Panc1 (cell line): ENCODE measurements at regions of chr10 and their contacts with region 1.

Region 1: DNA sequence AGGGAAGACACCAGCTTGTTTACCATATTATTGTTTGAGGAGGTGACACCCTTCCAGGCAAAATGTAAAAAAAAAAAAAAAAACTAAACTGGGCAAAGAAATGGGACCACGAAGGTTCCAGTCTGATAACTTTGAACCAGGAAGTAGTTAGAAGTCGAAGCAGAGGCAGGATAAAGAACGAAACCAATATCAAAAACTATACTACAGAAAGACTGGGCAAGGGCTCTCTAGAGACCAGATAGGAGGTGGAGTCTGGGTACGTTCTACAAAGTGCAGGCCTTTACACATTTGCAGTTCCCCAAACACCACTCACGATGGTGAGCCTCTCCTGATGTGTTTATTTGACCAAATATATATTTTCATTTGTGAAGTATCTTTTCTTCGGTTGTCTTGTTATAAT is 125.7 kb upstream of the CDK1 start:
- DNase-seq: no peak
- ATAC-seq: no peak
- H3K4me3 ChIP-seq: no peak overlapping the region
- H3K27ac ChIP-seq: no peak overlapping the region
- H3K4me1 ChIP-seq: no peaks in the 10 kb centered on the region
- H3K27me3 ChIP-seq: no peaks in the 10 kb centered on the region
- CTCF ChIP-seq: no peak

Region 2: GRCh38 chr10:60473563-60473962 is 179.1 kb before region 1 on chr10:
- CTCF ChIA-PET with region 1: interaction called, 5 read pairs
- POLR2A ChIA-PET with region 1: interaction called, 10 read pairs
- in situ Hi-C with region 1: no loop called
- intact Hi-C with region 1: no loop called
- DNase-seq: peak; percentile 87
- ATAC-seq: peak; percentile 99
- H3K4me3 ChIP-seq: no peak overlapping the region
- H3K27ac ChIP-seq: peak overlapping the region; percentile 62; the same call in 1 of the 2 replicates
- H3K4me1 ChIP-seq: peaks cover 7% of the 10 kb centered on the region
- H3K27me3 ChIP-seq: no peaks in the 10 kb centered on the region
- CTCF ChIP-seq: no peak

Region 3: DNA sequence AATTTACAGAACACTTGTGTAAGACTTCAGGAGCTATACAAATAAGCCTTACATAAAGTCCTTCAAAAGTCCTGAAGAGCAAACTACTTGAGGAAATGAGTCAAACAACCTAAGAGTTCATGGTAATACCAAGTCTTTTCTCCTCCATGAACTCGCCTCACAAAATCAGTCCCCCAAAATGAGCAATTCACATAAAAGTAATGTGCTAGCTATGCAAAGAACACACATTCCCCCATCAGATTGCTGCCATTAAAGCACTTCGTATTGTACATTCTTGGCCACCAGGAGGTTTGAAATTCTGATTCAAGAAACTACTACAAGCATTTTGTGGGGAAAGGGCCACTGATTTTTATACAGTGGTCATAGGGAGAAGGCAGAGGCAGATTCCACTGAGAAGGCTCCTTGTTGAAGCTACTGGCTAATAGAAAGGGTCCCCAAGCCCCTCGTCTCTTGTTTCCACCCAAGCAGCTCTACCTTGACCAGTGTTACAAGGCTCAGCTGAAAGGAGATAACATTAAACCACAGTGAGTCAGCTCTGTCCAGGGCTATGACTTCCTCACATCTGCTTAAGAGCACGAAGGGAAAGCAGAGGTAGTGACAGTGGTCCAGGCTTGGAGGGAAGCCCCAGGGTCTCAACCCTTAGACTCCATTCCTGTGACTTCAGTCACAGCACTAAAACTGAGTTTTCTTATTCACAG is 10.4 kb after region 1 on chr10:
- CTCF ChIA-PET with region 1: no interaction called
- POLR2A ChIA-PET with region 1: no interaction called
- in situ Hi-C with region 1: no loop called
- intact Hi-C with region 1: no loop called
- DNase-seq: no peak
- ATAC-seq: no peak
- H3K4me3 ChIP-seq: no peak overlapping the region
- H3K27ac ChIP-seq: no peak overlapping the region
- H3K4me1 ChIP-seq: no peaks in the 10 kb centered on the region
- H3K27me3 ChIP-seq: peaks cover 4% of the 10 kb centered on the region; the same call in 1 of the 2 replicates
- CTCF ChIP-seq: peak; percentile 9; the same call in 1 of the 2 replicates

Region 4: DNA sequence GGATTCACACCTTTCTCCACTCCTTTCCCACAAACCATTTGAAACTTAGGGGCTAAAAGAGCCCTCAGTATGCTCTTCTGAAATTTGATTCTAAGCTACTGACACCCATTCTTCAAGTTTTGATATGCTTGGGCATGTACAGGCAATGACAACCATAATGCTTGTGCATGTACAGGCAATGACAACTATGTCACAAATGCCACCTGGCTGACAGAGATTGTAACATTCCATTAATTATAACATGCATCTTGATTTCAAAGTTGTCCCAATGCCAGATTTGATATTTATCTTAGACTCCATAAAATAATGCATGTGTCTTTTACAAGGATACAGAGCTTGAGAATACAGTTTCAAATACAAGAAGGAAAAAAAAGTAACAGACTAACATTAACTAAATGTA is 108.1 kb after region 1 on chr10:
- CTCF ChIA-PET with region 1: no interaction called
- POLR2A ChIA-PET with region 1: no interaction called
- in situ Hi-C with region 1: no loop called
- intact Hi-C with region 1: loop called (anchors 10 kb)
- DNase-seq: no peak
- ATAC-seq: no peak
- H3K4me3 ChIP-seq: no peak overlapping the region
- H3K27ac ChIP-seq: no peak overlapping the region
- H3K4me1 ChIP-seq: no peaks in the 10 kb centered on the region
- H3K27me3 ChIP-seq: peaks cover 8% of the 10 kb centered on the region
- CTCF ChIP-seq: no peak